Activated naive CD4-positive, alpha-beta T cell treated with anti-CD3 and anti-CD28 coated beads for 36 hours (primary cell): ENCODE measurements at regions of chr4 and their contacts with region 1.

Region 1: DNA sequence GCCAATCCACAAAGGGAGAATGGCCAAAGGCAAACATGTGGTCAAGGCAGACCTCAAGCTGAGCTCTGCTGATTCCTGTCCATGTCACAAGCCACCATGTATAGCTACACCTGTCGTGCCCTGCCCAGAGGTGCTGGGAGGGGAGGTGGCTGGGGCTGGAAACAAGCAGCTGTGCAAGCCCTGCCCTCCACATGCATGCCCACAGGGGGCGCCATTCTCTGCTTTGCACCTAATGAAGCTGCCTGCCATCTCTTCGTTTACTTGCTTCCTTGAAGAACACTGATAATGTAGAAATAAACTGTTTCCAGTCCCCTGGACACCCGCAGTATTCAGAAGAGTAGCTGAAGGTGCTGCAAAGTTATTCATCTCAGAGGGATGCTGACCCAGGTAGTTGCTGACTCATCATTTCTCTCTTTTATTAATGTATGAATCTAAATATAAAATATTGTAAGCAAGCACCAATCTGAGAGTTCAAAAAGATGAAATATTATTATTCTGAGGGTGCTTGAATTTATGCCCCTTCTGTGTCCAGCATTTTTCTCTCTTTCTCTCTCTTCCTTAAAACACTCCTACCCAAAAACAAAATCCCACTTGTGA is 278.6 kb downstream of the ADGRA3 start:
- DNase-seq: peak; percentile 70
- H3K4me3 Mint-ChIP-seq: no peak overlapping the region
- H3K27ac Mint-ChIP-seq: no peak overlapping the region
- H3K4me1 Mint-ChIP-seq: no peaks in the 10 kb centered on the region
- H3K27me3 Mint-ChIP-seq: peaks cover 4% of the 10 kb centered on the region

Region 2: DNA sequence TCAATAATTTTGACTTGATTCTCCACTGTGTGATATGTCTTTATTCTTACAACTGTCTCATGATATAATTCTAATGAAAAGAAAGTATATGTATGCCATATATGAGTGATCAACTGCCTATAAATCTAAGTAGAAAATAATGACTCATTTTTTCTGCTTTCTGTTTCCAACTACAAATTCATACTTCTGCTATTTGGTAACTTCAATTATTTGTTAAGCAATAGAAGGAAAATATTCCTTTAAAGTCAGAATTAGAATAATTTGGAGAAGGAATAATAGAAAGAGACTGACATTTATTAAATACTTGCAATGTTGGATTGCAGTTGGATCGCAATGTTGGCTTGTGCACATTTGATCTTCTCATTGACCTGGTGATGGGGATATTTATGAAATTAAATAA is 1741.2 kb before region 1 on chr4:
- CTCF ChIA-PET with region 1: no interaction called
- intact Hi-C with region 1: no loop called
- DNase-seq: no peak
- H3K4me3 Mint-ChIP-seq: no peak overlapping the region
- H3K27ac Mint-ChIP-seq: no peak overlapping the region
- H3K4me1 Mint-ChIP-seq: no peaks in the 10 kb centered on the region
- H3K27me3 Mint-ChIP-seq: no peaks in the 10 kb centered on the region

Region 3: DNA sequence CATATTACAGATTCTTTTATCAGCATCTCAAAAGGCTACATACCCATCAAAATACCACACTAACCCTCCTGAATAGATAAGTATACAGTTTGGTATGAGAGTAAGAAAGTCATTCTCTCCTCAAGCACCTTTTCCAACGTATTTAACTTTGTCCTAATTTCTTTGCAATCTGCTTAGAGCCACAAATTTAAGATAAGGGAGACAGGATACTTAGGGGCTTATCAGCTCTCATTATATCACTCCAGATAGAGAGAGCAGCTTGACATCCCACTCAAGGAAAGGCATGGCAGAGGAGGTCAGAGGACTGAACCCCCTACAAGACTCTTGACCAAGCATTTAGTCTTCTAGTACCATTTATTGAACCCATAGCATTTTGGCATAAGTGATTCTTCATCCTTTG is 16.2 kb after region 1 on chr4:
- CTCF ChIA-PET with region 1: no interaction called
- intact Hi-C with region 1: no loop called
- DNase-seq: no peak
- H3K4me3 Mint-ChIP-seq: no peak overlapping the region
- H3K27ac Mint-ChIP-seq: no peak overlapping the region
- H3K4me1 Mint-ChIP-seq: no peaks in the 10 kb centered on the region
- H3K27me3 Mint-ChIP-seq: no peaks in the 10 kb centered on the region

Region 4: GRCh38 chr4:22688236-22688635 is 451.0 kb after region 1 on chr4:
- CTCF ChIA-PET with region 1: no interaction called
- intact Hi-C with region 1: loop called (anchors 2 kb)
- DNase-seq: no peak
- H3K4me3 Mint-ChIP-seq: no peak overlapping the region
- H3K27ac Mint-ChIP-seq: no peak overlapping the region
- H3K4me1 Mint-ChIP-seq: peaks cover 19% of the 10 kb centered on the region
- H3K27me3 Mint-ChIP-seq: no peaks in the 10 kb centered on the region